ENCODE measurements at regions of chr14 and their contacts with region 1.

Region 1: DNA sequence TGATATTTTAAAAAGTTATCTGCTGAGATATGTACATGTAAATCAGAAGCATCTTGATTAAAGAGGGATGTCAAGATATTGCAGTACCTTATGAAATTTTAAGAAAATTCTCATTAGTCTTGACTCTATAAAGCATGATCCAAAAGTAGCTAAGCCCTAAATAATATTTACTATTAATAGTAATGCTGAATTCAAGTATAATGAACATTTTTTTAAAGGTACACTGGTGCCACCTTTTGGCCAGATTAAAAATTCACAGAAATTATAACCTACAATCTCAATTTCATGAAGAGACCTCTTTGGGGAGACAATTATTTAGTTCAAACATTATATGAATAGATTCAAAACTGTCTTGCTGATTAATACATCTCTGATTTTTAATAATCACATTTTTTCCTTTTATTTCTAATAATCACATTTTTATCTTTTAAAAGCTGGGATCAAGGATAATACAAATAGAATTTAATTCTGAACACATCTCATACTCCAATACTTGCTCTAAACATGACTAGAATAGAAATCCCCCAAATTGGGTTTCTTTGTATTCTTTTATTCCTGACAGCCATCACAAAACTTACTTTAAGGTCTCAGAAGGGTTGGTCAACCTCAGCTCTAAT is 13.4 kb downstream of the AKAP5 start:
- DNase-seq: peak; percentile 39
- H3K4me3 ChIP-seq: no peak overlapping the region
- H3K27ac ChIP-seq: no peak overlapping the region
- H3K4me1 ChIP-seq: peaks cover 0 to 2% of the 10 kb centered on the region in 2 experiments; a peak in 1 of 4 replicates
- H3K27me3 ChIP-seq: no peaks in the 10 kb centered on the region
- CTCF ChIP-seq: peak; percentile 73
- EP300 ChIP-seq: no peak
- RAD21 ChIP-seq: peak; percentile 73

Region 2: DNA sequence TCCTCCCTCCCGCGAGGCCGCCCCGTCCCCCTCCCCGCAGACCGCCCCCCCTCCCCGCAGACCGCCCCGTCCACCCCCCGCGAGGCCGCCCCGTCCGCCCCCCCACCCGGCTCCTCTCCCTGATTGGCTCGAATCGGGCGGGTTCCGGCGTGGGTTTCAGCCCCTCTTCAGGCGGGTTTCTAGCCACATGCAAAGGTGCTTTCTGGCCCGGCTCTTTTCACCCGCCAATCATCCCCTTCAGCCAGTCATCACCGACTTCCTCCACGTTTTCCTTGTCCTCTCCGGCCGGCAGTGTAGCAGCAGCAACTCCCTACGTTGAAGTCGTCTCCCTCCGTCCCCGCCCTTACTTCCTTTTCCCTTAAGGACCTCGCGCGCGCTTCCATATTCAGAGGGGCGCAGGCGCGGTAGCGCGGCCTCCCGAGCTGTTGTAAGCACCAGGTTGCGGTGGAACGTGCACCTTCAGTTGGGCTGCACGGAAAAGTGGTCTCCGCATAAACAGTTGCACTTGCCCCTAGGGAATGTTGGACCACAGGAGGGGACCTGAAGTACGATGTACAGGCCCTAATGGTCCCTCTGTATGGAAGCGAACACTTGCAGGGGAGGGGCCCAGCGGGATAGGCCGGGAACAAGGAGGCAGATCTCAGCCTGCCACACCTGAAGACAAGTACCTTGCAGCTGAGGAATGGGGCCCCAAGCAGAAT is 140.0 kb before region 1 on chr14:
- CTCF ChIA-PET with region 1: interaction called, 40 read pairs
- POLR2A ChIA-PET with region 1: no interaction called
- DNase-seq: peak; percentile 96
- H3K4me3 ChIP-seq: peak overlapping the region; percentile 85 to 90
- H3K27ac ChIP-seq: peak overlapping the region; percentile 45 to 97; a peak in 3 of 4 replicates
- H3K4me1 ChIP-seq: peaks cover 0 to 7% of the 10 kb centered on the region in 2 experiments; a peak in 2 of 4 replicates
- H3K27me3 ChIP-seq: no peaks in the 10 kb centered on the region
- CTCF ChIP-seq: no peak
- EP300 ChIP-seq: no peak
- RAD21 ChIP-seq: no peak

Region 3: GRCh38 chr14:64444984-64445845 is 33.5 kb before region 1 on chr14:
- CTCF ChIA-PET with region 1: interaction called, 10 read pairs
- POLR2A ChIA-PET with region 1: no interaction called
- DNase-seq: peak; percentile 56
- H3K4me3 ChIP-seq: no peak overlapping the region
- H3K27ac ChIP-seq: peak overlapping the region; percentile 71 to 94
- H3K4me1 ChIP-seq: peaks cover 17 to 24% of the 10 kb centered on the region in 2 experiments; a peak in 3 of 4 replicates
- H3K27me3 ChIP-seq: no peaks in the 10 kb centered on the region
- CTCF ChIP-seq: no peak
- EP300 ChIP-seq: peak; percentile 14 to 83; a peak in 2 of 4 replicates
- RAD21 ChIP-seq: no peak

Region 4: GRCh38 chr14:64491637-64492036 is 12.9 kb after region 1 on chr14:
- CTCF ChIA-PET with region 1: interaction called, 23 read pairs
- POLR2A ChIA-PET with region 1: no interaction called
- DNase-seq: no peak
- H3K4me3 ChIP-seq: no peak overlapping the region
- H3K27ac ChIP-seq: no peak overlapping the region
- H3K4me1 ChIP-seq: no peaks in the 10 kb centered on the region; a peak in 1 of 4 replicates
- H3K27me3 ChIP-seq: no peaks in the 10 kb centered on the region
- CTCF ChIP-seq: no peak
- EP300 ChIP-seq: no peak
- RAD21 ChIP-seq: no peak

Region 5: GRCh38 chr14:64503478-64504309 is 25.0 kb after region 1 on chr14 and contains the start of gene ZBTB25:
- CTCF ChIA-PET with region 1: interaction called, 20 read pairs
- POLR2A ChIA-PET with region 1: no interaction called
- DNase-seq: peak; percentile 90
- H3K4me3 ChIP-seq: peak within 1 kb of the TSS; percentile 92
- H3K27ac ChIP-seq: peak within 1 kb of the TSS; percentile 95 to 99
- H3K4me1 ChIP-seq: peaks cover 34 to 37% of the 10 kb centered on the region in 2 experiments
- H3K27me3 ChIP-seq: no peaks in the 10 kb centered on the region
- CTCF ChIP-seq: no peak
- EP300 ChIP-seq: no peak; a peak in 1 of 4 replicates
- RAD21 ChIP-seq: no peak
- polyA plus RNA-seq, gene ZBTB25: 4.5 and 5.7 TPM in 2 replicates

Region 6: GRCh38 chr14:64636208-64636979 is 157.7 kb after region 1 on chr14:
- CTCF ChIA-PET with region 1: interaction called, 10 read pairs
- POLR2A ChIA-PET with region 1: no interaction called
- DNase-seq: peak; percentile 83
- H3K4me3 ChIP-seq: no peak overlapping the region
- H3K27ac ChIP-seq: no peak overlapping the region
- H3K4me1 ChIP-seq: peaks cover 0 to 3% of the 10 kb centered on the region in 2 experiments; a peak in 2 of 4 replicates
- H3K27me3 ChIP-seq: no peaks in the 10 kb centered on the region
- CTCF ChIP-seq: peak; percentile 90
- EP300 ChIP-seq: no peak
- RAD21 ChIP-seq: peak; percentile 79